HepG2 (cell line): ENCODE measurements at regions of chr2 and their contacts with region 1.

Region 1: DNA sequence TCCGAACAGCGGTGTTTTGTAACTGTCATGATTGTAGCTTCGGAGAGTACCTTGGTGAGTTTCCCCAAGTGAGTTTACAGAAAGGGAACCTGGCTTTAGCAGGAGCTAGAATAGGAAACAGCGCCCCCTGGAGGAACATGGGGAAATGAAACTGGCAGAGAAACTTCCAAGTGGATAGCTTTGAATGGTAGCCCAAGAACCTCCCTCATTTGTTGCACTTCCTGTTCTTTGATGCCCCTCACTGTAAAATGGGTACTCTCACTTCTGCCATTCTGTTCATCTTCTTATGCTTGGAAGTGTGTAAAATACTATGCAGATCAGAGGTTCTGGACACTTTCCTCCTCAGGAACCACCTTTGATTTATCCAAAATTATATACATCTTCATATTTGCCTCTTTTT is 36.2 kb downstream of the CHST10 start:
- DNase-seq: peak; percentile 67
- ATAC-seq: peak; percentile 86
- H3K4me3 ChIP-seq: no peak overlapping the region
- H3K27ac ChIP-seq: no peak overlapping the region
- H3K4me1 ChIP-seq: no peaks in the 10 kb centered on the region
- H3K27me3 ChIP-seq: peaks cover 0 to 4% of the 10 kb centered on the region in 2 experiments; a peak in 2 of 5 replicates
- CTCF ChIP-seq: peak; percentile 88
- EP300 ChIP-seq: no peak
- POLR2A ChIP-seq: no peak
- RAD21 ChIP-seq: peak; percentile 62

Region 2: GRCh38 chr2:100262555-100263320 is 118.5 kb before region 1 on chr2:
- CTCF ChIA-PET with region 1: interaction called, 68 read pairs
- POLR2A ChIA-PET with region 1: interaction called, 5 read pairs
- in situ Hi-C with region 1: loop called (anchors 5 kb)
- intact Hi-C with region 1: loop called (anchors 1 kb)
- DNase-seq: peak; percentile 41
- ATAC-seq: peak; percentile 70
- H3K4me3 ChIP-seq: no peak overlapping the region
- H3K27ac ChIP-seq: no peak overlapping the region
- H3K4me1 ChIP-seq: no peaks in the 10 kb centered on the region
- H3K27me3 ChIP-seq: peaks cover 0 to 4% of the 10 kb centered on the region in 2 experiments; a peak in 2 of 5 replicates
- CTCF ChIP-seq: peak; percentile 91
- EP300 ChIP-seq: no peak
- POLR2A ChIP-seq: no peak
- RAD21 ChIP-seq: peak; percentile 80